Dorsolateral prefrontal cortex (tissue), 120 donors: ENCODE measurements at regions of chr1 and their contacts with region 1.

Region 1: DNA sequence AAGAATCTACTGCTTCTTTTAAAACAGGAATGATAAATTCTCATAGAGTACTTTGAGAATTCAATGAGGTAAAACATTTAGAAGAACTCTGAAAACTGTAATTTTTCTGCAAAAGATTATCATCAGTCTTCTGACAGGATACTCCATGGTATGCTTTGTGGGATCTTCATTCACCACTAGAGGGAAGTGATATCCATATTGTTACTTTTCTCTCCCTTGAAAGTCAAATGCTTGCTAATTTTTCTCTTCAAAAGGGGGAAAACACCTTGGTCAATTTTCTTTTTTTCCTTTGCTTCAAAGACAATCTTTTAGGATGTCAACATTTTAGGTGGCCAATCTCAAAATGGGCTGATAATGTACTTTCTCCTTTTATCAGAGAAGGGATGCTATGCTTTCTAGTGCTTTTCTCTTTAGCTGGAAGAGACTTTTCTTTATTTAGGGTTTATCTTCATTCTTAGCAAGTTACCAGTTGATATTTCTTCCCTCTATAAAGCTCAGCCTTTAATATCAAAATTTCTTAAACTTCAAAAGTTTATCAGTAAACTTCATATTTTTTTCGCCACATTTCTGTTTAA is 95.5 kb downstream of the NEGR1 start:
- DNase-seq: no peak
- H3K4me3 ChIP-seq: no peak overlapping the region
- H3K27ac ChIP-seq: no peak overlapping the region
- H3K27me3 ChIP-seq: no peaks in the 10 kb centered on the region
- CTCF ChIP-seq: peak; percentile 22 to 78 (median 60)

Region 2: GRCh38 chr1:72282271-72283021 is 95.6 kb after region 1 on chr1 and contains the start of gene NEGR1:
- intact Hi-C with region 1: loop called in 1 of 2 experiments (anchors 5 kb)
- DNase-seq: peak; percentile 71 to 91 (median 82)
- H3K4me3 ChIP-seq: peak within 1 kb of the TSS; percentile 53 to 93 (median 80)
- H3K27ac ChIP-seq: peak within 1 kb of the TSS; percentile 95 to 100 (median 99)
- H3K27me3 ChIP-seq: no peaks in the 10 kb centered on the region
- CTCF ChIP-seq: peak in 21 of 56 donors; percentile 3 to 42 (median 15)
- total RNA-seq, gene NEGR1: 38.5 to 260 (median 150) TPM